Activated CD8-positive, alpha-beta T cell treated with anti-CD3 and anti-CD28 coated beads for 36 hours (primary cell): ENCODE measurements at regions of chr1 and their contacts with region 1.

Region 1: GRCh38 chr1:15803354-15803753 is 4.1 kb downstream of the UQCRHL start:
- DNase-seq: peak; percentile 27
- ATAC-seq: peak; percentile 50
- H3K4me3 Mint-ChIP-seq: no peak overlapping the region
- H3K27ac Mint-ChIP-seq: no peak overlapping the region
- H3K4me1 Mint-ChIP-seq: peaks cover 4% of the 10 kb centered on the region
- H3K27me3 Mint-ChIP-seq: peaks cover 1% of the 10 kb centered on the region
- CTCF ChIP-seq: peak; percentile 47

Region 2: GRCh38 chr1:15994590-15995351 is 191.4 kb after region 1 on chr1:
- CTCF ChIA-PET with region 1: interaction called, 3 read pairs
- POLR2A ChIA-PET with region 1: no interaction called
- intact Hi-C with region 1: loop called (anchors 5 kb)
- DNase-seq: peak; percentile 70
- ATAC-seq: peak; percentile 97
- H3K4me3 Mint-ChIP-seq: no peak overlapping the region
- H3K27ac Mint-ChIP-seq: no peak overlapping the region
- H3K4me1 Mint-ChIP-seq: no peaks in the 10 kb centered on the region
- H3K27me3 Mint-ChIP-seq: no peaks in the 10 kb centered on the region
- CTCF ChIP-seq: peak; percentile 68

Region 3: DNA sequence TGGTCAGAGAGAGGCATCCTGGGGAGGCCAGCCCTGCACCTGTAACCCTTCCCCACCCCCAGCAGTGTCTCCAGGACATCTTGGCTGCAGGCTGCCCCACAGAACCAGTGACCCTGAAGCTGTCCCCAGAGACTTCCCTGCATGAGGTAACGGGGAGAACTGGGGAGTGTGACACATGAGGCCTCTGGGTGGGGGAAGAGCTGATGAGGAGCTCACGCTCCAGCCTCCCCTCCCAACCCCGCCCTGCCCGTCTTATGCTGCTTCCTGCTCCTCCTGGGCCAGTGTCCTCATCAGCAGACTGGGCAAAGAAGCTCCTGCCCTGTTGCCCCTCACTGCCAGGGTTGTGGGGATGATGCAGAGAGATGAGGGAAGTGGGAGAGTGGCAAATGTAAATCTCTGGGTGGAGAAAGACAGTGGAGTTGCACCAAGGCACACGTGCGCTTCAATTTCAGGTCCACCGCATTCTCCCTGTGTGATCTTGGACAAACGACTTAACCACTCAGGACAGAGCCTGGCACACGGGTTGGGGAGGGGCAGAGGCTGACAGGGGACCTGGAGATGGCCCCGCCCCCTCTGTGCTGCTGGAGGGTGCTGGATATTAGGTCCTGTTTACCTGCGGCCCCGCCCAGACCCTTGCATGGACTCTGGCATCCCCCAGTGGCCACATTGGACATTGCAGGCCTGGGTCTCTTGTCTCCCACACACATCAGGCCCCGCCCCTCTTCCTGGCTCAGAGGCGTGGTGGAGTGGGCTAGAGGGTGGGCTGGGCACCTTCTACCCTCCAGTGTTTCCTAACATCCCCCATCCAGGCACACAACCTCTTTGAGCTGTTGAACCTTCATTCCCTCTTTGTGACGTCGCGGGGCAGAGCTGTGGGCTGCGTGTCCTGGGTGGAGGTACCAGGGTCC is 252.5 kb after region 1 on chr1:
- CTCF ChIA-PET with region 1: interaction called, 3 read pairs
- POLR2A ChIA-PET with region 1: no interaction called
- intact Hi-C with region 1: loop called (anchors 10 kb)
- DNase-seq: peak; percentile 96
- ATAC-seq: peak; percentile 100
- H3K4me3 Mint-ChIP-seq: no peak overlapping the region
- H3K27ac Mint-ChIP-seq: no peak overlapping the region
- H3K4me1 Mint-ChIP-seq: peaks cover 2% of the 10 kb centered on the region
- H3K27me3 Mint-ChIP-seq: no peaks in the 10 kb centered on the region
- CTCF ChIP-seq: peak; percentile 95